HCT116 (cell line): ENCODE measurements at regions of chr13 and their contacts with region 1.

Region 1: GRCh38 chr13:103431856-103432255 is 365.6 kb upstream of the SLC10A2 start:
- DNase-seq: no peak
- ATAC-seq: no peak
- H3K4me3 ChIP-seq: no peak overlapping the region
- H3K27ac ChIP-seq: no peak overlapping the region
- H3K4me1 ChIP-seq: no peaks in the 10 kb centered on the region
- H3K27me3 ChIP-seq: no peaks in the 10 kb centered on the region
- CTCF ChIP-seq: no peak
- POLR2A ChIP-seq: no peak
- RAD21 ChIP-seq: no peak

Region 2: DNA sequence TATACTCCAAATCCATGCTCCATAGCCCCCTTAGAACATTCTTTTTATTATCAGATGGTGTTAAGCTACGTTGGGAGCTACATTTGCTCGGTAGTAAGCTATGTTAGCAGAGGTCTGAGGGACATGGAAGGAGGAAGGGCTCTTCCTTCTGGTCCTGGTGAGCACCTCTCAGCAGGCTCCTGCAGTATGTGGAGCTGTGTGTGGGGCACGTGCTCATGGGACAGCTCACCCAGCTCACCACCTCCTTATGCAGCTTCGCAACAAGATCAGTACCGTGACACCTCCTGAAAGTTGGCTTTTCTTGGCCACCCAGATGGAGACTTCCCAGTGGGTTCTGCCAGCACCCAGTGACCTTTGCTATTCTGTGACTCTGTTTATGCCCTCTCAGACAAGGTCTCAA is 34.9 kb after region 1 on chr13:
- CTCF ChIA-PET with region 1: no interaction called
- POLR2A ChIA-PET with region 1: no interaction called
- RAD21 ChIA-PET with region 1: no interaction called
- intact Hi-C with region 1: loop called (anchors 1 kb)
- DNase-seq: no peak
- ATAC-seq: no peak
- H3K4me3 ChIP-seq: no peak overlapping the region
- H3K27ac ChIP-seq: no peak overlapping the region
- H3K4me1 ChIP-seq: no peaks in the 10 kb centered on the region
- H3K27me3 ChIP-seq: no peaks in the 10 kb centered on the region
- CTCF ChIP-seq: no peak
- POLR2A ChIP-seq: no peak
- RAD21 ChIP-seq: no peak

Region 3: DNA sequence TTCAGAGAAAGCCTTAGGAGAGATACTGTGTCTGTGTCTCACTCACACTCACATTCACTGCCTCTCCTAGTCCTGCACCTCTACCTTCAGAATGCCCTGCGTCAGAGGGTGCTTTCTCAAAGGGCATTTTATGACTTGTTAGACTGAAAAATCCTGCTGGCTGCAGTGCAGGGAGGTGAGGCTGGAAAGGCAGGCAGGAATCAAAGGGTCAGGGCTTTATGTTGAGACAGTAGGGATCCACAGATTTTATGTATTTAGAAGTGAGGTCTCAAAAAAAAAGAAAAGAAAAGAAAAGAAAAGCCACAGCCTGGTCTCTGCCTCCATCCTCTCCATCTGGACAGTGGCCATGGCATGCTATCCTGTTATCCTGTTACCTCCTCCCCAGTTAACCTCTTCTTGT is 570.4 kb after region 1 on chr13:
- CTCF ChIA-PET with region 1: no interaction called
- POLR2A ChIA-PET with region 1: no interaction called
- RAD21 ChIA-PET with region 1: no interaction called
- intact Hi-C with region 1: no loop called
- DNase-seq: no peak
- ATAC-seq: no peak
- H3K4me3 ChIP-seq: no peak overlapping the region
- H3K27ac ChIP-seq: no peak overlapping the region
- H3K4me1 ChIP-seq: no peaks in the 10 kb centered on the region
- H3K27me3 ChIP-seq: no peaks in the 10 kb centered on the region
- CTCF ChIP-seq: no peak
- POLR2A ChIP-seq: no peak
- RAD21 ChIP-seq: no peak